H1 (cell line): ENCODE measurements at regions of chr1 and their contacts with region 1.

Region 1: DNA sequence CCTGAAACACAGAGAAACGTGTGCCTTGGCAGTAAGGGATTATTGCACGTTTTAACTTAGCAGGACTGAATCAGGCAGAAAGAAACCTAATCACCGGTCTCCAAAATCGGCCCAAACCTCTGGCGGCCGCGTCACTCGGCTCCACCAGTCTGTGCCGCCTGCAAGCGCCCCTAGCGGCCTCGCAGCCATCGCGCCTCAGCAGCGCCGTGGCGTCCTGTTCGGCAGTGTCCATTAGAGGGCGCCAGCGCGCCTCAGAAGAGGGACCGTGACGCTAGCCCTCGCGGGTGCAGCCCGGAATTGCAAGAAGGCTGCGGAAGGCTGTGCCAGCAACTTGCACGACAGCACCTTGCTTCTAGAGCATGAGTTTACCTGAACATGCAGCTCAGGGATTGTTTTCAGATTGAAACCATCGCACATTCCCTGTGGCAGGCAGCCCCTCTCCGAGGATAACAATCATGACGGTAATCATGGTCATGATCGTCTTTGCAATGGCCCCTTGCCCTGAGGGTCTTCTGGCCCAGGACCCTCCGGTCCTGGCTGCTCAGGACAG is 164.4 kb downstream of the TRIM33 start:
- DNase-seq: peak; percentile 92 to 100
- H3K4me3 ChIP-seq: peak overlapping the region; percentile 8 to 56 (median 25); a peak in 6 of 8 replicates
- H3K27ac ChIP-seq: no peak overlapping the region
- H3K4me1 ChIP-seq: peaks cover 0 to 10% (median 5%) of the 10 kb centered on the region in 4 experiments; a peak in 4 of 7 replicates
- H3K27me3 ChIP-seq: peaks cover 0 to 9% (median 3%) of the 10 kb centered on the region in 4 experiments; a peak in 2 of 7 replicates
- CTCF ChIP-seq: peak; percentile 100
- EP300 ChIP-seq: no peak
- POLR2A ChIP-seq: no peak
- RAD21 ChIP-seq: peak; percentile 99 to 100

Region 2: GRCh38 chr1:114178936-114179335 is 167.6 kb before region 1 on chr1:
- CTCF ChIA-PET with region 1: no interaction called
- POLR2A ChIA-PET with region 1: no interaction called
- DNase-seq: no peak
- H3K4me3 ChIP-seq: no peak overlapping the region
- H3K27ac ChIP-seq: no peak overlapping the region
- H3K4me1 ChIP-seq: peaks cover 0 to 3% (median 2%) of the 10 kb centered on the region in 4 experiments; a peak in 3 of 7 replicates
- H3K27me3 ChIP-seq: no peaks in the 10 kb centered on the region; a peak in 1 of 7 replicates
- CTCF ChIP-seq: no peak
- EP300 ChIP-seq: no peak
- POLR2A ChIP-seq: no peak
- RAD21 ChIP-seq: no peak

Region 3: DNA sequence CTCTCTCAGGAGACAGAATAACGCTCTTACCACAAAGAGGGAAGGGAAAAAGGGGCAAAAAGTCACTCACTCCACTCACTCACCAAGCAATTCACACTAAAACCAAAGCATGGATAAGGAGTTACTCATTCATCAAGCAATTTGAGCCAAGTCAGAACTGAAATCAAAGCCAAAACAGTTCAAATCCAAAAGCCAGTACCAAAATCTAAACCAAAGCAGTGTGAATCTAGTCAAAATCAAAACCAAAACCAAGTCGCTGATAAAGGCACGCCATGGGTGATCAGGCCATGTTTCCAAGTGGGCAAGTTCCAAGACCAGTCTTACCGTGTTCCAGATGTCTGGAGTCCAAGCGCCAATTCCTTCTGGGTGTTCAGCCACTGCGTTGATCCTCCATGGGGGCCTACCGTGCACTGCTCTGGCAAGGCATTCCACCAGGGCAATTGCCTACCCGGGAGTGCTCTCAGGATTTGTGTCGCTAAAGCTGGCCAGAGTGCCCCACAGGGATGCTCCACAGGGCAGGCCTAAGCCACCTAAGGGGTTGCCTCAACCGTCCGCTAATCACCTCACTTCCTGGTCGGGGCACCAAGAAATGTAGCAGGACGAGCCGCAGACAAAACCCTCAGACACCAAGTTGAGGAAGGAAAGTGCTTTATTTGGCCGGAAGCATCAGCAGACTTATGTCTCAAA is 22.1 kb after region 1 on chr1:
- CTCF ChIA-PET with region 1: interaction called, 10 read pairs
- POLR2A ChIA-PET with region 1: no interaction called
- DNase-seq: peak in 1 of 2 experiments; percentile 43
- H3K4me3 ChIP-seq: no peak overlapping the region
- H3K27ac ChIP-seq: no peak overlapping the region
- H3K4me1 ChIP-seq: peaks cover 0 to 4% (median 0%) of the 10 kb centered on the region in 4 experiments; a peak in 2 of 7 replicates
- H3K27me3 ChIP-seq: no peaks in the 10 kb centered on the region
- CTCF ChIP-seq: no peak
- EP300 ChIP-seq: no peak
- POLR2A ChIP-seq: no peak
- RAD21 ChIP-seq: no peak

Region 4: GRCh38 chr1:114386129-114387009 is 39.8 kb after region 1 on chr1:
- CTCF ChIA-PET with region 1: interaction called, 16 read pairs
- POLR2A ChIA-PET with region 1: no interaction called
- DNase-seq: peak in 1 of 2 experiments; percentile 27
- H3K4me3 ChIP-seq: no peak overlapping the region
- H3K27ac ChIP-seq: no peak overlapping the region
- H3K4me1 ChIP-seq: peaks cover 0 to 5% (median 0%) of the 10 kb centered on the region in 4 experiments; a peak in 3 of 7 replicates
- H3K27me3 ChIP-seq: no peaks in the 10 kb centered on the region
- CTCF ChIP-seq: no peak
- EP300 ChIP-seq: no peak
- POLR2A ChIP-seq: no peak
- RAD21 ChIP-seq: no peak

Region 5: DNA sequence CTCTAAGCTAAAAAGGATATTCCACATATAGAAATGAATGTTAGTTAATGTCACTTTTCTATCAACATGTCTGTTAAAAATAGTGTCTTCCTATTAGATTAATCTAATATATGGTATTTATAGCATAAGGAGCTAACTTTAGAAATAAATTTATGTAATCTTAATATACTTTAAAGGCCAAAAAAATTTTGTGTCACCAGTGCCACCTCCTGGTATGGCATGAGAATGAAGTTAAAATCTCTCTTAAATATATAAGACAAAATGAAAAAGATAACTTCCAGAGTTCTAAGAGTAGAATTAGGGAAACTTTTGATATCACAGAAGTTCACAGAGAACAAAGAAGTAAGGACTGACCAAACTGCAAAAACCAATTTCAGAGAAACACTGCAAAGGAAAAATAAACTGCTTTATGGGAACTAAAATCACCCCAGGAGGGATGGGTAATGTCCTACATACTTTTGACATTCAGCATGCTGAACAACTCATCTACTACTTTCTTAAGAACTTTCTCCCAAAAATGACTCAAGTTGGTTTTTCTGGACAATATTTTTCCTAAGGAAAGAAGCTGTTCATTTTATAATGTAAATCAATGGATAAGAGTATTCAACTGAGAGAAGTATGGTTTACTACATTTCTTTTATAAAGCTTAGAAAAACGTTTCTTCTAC is 81.7 kb after region 1 on chr1:
- CTCF ChIA-PET with region 1: interaction called, 14 read pairs
- POLR2A ChIA-PET with region 1: no interaction called
- DNase-seq: no peak
- H3K4me3 ChIP-seq: no peak overlapping the region
- H3K27ac ChIP-seq: no peak overlapping the region
- H3K4me1 ChIP-seq: no peaks in the 10 kb centered on the region
- H3K27me3 ChIP-seq: no peaks in the 10 kb centered on the region
- CTCF ChIP-seq: peak in 1 of 3 experiments; percentile 14; a peak in 2 of 4 replicates
- EP300 ChIP-seq: no peak
- POLR2A ChIP-seq: no peak
- RAD21 ChIP-seq: peak in 1 of 2 experiments; percentile 20; a peak in 1 of 4 replicates